Prostate gland (tissue), 2 donors: ENCODE measurements at regions of chr1 and their contacts with region 1.

Region 1: DNA sequence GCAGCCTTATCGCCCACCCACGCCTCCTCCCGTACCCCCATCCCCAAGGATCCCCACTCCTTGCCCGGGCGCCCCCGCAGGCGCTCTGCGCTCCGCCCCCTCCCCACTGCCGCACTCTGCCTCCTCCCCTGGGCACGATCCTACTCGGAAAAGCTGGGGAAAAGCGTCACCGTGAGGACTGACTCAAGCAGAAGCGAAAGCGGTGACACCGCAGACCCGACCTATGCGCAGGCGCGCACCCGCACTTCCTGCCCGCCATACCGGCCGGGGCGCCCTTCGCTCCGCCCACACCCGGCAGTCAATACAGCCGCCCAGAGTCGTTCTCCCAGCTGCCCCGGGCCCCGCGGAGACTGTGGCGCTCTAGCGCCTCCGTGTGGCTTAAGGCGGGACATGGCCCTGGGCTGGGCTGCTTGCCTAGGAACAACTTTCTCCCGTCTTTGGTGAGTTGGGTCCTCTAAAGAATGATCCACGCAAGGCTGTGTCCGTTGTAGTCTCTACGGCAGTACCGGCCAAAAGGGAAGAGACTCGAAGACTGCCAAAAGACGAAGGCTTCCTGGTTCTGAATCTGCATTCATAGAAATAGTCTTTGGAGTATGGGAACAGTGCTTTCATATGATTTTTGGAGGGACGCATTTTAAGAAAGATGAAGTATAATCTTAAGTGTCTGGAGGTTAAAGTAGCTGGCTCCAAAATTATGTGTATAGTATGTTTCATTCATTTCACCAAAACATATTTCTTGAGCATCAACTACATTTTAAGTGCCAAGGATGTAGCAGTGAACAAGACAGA is at the start of gene OMA1:
- DNase-seq: peak; percentile 94
- H3K4me3 ChIP-seq: peak within 1 kb of the TSS; percentile 74 to 81
- H3K27ac ChIP-seq: peak within 1 kb of the TSS; percentile 100
- H3K4me1 ChIP-seq: no peaks in the 10 kb centered on the region
- H3K27me3 ChIP-seq: no peaks in the 10 kb centered on the region
- CTCF ChIP-seq: peak; percentile 95 to 99 (median 98)
- POLR2A ChIP-seq: peak; percentile 89
- total RNA-seq, gene OMA1: 26.4 to 46.6 TPM

Region 2: DNA sequence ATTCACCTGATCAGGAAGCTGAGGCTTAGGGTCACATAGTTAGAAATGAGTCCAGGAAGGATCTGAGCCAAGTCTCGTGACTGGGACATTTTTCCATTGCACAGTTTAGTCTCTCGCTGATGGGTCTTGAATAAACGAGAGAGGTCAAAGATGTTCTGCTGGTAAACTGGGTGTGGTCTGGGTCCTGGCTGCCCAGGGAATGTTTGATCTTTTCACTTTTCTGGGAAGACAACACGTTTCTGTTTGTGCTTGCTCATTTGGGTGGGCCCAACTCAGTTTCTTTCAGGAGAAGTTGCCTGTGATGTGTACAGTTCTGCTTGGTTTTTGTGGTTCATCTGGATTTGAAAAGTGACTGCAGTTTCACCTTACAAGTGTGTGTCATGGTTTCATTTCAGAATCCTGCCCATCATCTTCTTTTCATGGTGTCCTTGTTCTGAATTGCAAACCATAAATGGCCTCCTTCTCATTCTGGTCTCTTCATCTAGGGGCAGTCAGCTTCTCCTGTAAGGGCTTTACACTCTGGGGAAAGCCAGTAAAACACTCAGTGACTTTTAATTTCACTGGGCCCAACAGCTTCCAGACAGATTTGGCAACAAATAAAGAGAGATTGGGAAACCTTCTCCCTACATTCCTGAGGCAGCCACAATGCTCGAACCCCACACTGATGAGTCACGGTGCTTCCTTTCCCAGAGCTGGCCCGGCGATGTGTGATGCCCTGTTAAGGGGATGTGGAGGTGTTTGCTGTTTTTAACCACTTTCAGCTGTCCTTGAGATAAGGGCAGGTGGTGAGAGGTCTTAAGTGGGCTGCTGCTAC is 37.6 kb after region 1 on chr1:
- intact Hi-C with region 1: loop called (anchors 5 kb)
- DNase-seq: peak; percentile 73
- H3K4me3 ChIP-seq: no peak overlapping the region
- H3K27ac ChIP-seq: peak overlapping the region; percentile 56 to 68
- H3K4me1 ChIP-seq: no peaks in the 10 kb centered on the region
- H3K27me3 ChIP-seq: no peaks in the 10 kb centered on the region
- CTCF ChIP-seq: no peak
- POLR2A ChIP-seq: no peak

Region 3: GRCh38 chr1:58652651-58653184 is 106.0 kb after region 1 on chr1:
- intact Hi-C with region 1: loop called (anchors 10 kb)
- DNase-seq: peak; percentile 77
- H3K4me3 ChIP-seq: no peak overlapping the region
- H3K27ac ChIP-seq: no peak overlapping the region
- H3K4me1 ChIP-seq: no peaks in the 10 kb centered on the region
- H3K27me3 ChIP-seq: no peaks in the 10 kb centered on the region
- CTCF ChIP-seq: peak; percentile 78 to 94 (median 92)
- POLR2A ChIP-seq: no peak